ENCODE measurements at regions of chr10 and their contacts with region 1.

Region 1: DNA sequence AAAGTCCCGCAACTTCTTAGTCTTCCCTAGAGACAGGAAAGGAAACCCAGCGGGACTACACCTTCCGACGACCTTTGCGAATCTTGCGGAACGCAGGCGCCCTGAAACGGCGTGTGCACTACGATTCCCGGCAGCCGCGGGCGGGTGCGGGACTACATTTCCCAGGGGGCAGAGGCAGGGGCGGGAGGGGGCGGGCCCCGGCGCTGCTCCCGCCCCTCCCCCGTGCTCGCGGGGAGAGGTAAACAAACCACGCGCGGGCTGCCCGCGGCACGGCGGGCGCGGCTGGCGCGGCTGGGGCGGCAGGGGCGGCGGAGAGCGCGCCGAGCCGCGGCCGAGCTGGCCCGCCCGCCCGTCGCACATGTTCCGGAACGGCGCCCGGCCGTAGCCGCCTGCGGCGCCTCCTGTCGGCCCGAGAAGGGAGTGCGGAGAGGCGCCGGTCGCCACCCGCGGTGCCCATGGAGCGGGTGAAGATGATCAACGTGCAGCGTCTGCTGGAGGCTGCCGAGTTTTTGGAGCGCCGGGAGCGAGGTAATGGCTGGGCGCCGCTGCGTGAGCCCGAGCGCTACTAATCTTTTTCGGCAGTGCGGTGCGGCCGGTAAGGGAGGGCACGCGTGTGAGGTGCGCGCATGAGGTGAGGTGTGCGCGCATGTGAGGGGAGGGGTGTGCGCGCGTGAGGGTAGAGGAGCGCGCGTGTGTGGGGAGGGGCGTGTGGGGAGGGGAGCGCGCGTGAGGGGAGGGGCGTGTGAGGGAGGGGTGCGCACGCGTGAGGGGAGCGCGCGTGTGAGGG is 18.5 kb downstream of the MXI1 start:
- DNase-seq: peak; percentile 79 to 95
- H3K4me3 ChIP-seq: peak overlapping the region; percentile 61 to 86 (median 66)
- H3K27ac ChIP-seq: no peak overlapping the region; the same call in 1 of the 2 replicates
- H3K4me1 ChIP-seq: peaks cover 0 to 13% (median 6%) of the 10 kb centered on the region in 4 experiments; a peak in 6 of 7 replicates
- H3K27me3 ChIP-seq: peaks cover 0 to 2% (median 0%) of the 10 kb centered on the region in 4 experiments; a peak in 1 of 7 replicates
- CTCF ChIP-seq: peak; percentile 67 to 79 (median 70)
- EP300 ChIP-seq: no peak
- POLR2A ChIP-seq: no peak
- RAD21 ChIP-seq: peak; percentile 36 to 56

Region 2: GRCh38 chr10:110168601-110169481 is 57.1 kb before region 1 on chr10:
- CTCF ChIA-PET with region 1: interaction called, 33 read pairs
- POLR2A ChIA-PET with region 1: no interaction called
- DNase-seq: peak; percentile 47 to 51
- H3K4me3 ChIP-seq: no peak overlapping the region
- H3K27ac ChIP-seq: no peak overlapping the region
- H3K4me1 ChIP-seq: peaks cover 0 to 21% (median 8%) of the 10 kb centered on the region in 4 experiments; a peak in 6 of 7 replicates
- H3K27me3 ChIP-seq: peaks cover 69 to 99% (median 94%) of the 10 kb centered on the region in 4 experiments
- CTCF ChIP-seq: no peak
- EP300 ChIP-seq: peak in 1 of 2 experiments; percentile 87; a peak in 1 of 3 replicates
- POLR2A ChIP-seq: no peak
- RAD21 ChIP-seq: no peak

Region 3: DNA sequence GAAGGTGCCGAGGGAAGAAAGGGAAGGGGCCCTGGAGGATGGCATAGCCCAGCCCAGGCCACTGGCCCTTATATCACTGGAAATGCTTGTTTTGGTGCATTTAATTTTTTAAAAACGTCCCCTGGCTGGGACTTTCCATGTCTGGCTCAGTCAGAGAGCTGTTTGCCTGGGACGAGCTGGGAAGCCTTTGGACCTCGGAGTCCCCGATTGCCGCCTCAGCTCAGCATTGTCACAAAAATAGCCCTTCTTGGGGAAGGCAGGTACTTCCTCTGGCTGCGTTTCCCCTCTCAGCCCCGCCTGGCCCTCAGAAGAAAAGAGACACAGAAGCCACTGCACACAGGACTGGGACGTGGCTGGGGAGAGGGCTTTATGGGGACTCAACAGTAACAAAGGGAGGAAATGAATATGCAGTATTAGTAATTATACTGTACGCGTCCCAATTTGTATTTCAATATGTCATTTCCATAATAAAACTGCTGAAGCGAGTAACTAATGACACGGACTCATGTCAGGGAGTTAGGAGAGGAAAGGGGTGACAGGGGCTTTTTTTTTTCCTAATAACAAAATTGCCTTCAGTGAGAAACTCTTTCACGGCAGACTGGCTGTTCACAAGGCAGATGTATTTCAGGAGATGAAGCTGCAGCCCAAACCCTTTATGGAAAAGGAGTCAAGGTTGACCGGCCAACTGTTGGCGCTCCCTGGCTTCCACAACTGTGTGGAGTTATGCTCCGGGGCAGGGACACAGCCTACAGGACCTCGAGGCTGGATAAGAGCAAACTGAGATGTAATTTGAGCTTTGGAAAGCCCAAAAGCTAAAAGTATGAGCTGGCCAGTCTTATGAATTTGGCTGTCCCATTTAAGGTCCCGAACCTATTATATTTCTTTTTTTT is 49.6 kb before region 1 on chr10:
- CTCF ChIA-PET with region 1: interaction called, 18 read pairs
- POLR2A ChIA-PET with region 1: no interaction called
- DNase-seq: no peak
- H3K4me3 ChIP-seq: no peak overlapping the region
- H3K27ac ChIP-seq: no peak overlapping the region
- H3K4me1 ChIP-seq: peaks cover 7 to 17% (median 12%) of the 10 kb centered on the region in 4 experiments
- H3K27me3 ChIP-seq: peaks cover 11 to 58% (median 42%) of the 10 kb centered on the region in 4 experiments
- CTCF ChIP-seq: no peak
- EP300 ChIP-seq: no peak
- POLR2A ChIP-seq: no peak
- RAD21 ChIP-seq: no peak

Region 4: GRCh38 chr10:110192552-110192951 is 33.4 kb before region 1 on chr10:
- CTCF ChIA-PET with region 1: interaction called, 11 read pairs
- POLR2A ChIA-PET with region 1: no interaction called
- DNase-seq: peak in 1 of 2 experiments; percentile 52
- H3K4me3 ChIP-seq: no peak overlapping the region
- H3K27ac ChIP-seq: no peak overlapping the region
- H3K4me1 ChIP-seq: no peaks in the 10 kb centered on the region
- H3K27me3 ChIP-seq: peaks cover 0 to 4% (median 2%) of the 10 kb centered on the region in 4 experiments; a peak in 2 of 7 replicates
- CTCF ChIP-seq: peak; percentile 38 to 75 (median 63)
- EP300 ChIP-seq: no peak
- POLR2A ChIP-seq: no peak
- RAD21 ChIP-seq: peak in 1 of 2 experiments; percentile 45; a peak in 2 of 4 replicates

Region 5: DNA sequence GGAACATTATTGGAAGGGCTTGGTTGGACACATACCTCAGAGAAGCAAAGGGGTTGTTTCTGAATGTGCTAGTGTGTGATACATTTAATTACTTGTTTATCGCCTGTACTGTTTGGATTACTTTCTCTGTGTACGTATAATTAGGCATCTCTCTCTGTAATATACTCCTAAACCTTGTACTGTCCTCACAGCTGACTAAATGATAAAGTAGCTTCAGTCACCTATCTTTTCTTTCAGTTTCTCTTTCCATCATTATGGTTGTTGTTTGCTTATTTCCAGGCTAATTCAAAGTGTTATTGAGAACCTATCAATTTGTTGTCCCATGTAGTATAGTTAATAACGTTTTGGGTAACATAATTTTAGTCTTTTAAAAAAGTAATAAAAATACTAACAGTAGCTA is 15.5 kb after region 1 on chr10:
- CTCF ChIA-PET with region 1: no interaction called
- POLR2A ChIA-PET with region 1: no interaction called
- DNase-seq: no peak
- H3K4me3 ChIP-seq: no peak overlapping the region
- H3K27ac ChIP-seq: no peak overlapping the region
- H3K4me1 ChIP-seq: peaks cover 0 to 5% (median 0%) of the 10 kb centered on the region in 4 experiments; a peak in 2 of 7 replicates
- H3K27me3 ChIP-seq: no peaks in the 10 kb centered on the region
- CTCF ChIP-seq: no peak
- EP300 ChIP-seq: no peak
- POLR2A ChIP-seq: no peak
- RAD21 ChIP-seq: no peak

Region 6: GRCh38 chr10:110279407-110279986 is 53.5 kb after region 1 on chr10:
- CTCF ChIA-PET with region 1: interaction called, 21 read pairs
- POLR2A ChIA-PET with region 1: no interaction called
- DNase-seq: no peak
- H3K4me3 ChIP-seq: no peak overlapping the region
- H3K27ac ChIP-seq: no peak overlapping the region
- H3K4me1 ChIP-seq: no peaks in the 10 kb centered on the region
- H3K27me3 ChIP-seq: no peaks in the 10 kb centered on the region
- CTCF ChIP-seq: peak in 2 of 3 experiments; percentile 70 to 72; a peak in 3 of 4 replicates
- EP300 ChIP-seq: no peak
- POLR2A ChIP-seq: no peak
- RAD21 ChIP-seq: peak; percentile 83 to 86

Region 7: GRCh38 chr10:110354322-110354766 is 128.4 kb after region 1 on chr10:
- CTCF ChIA-PET with region 1: no interaction called
- POLR2A ChIA-PET with region 1: no interaction called
- DNase-seq: peak; percentile 58 to 92
- H3K4me3 ChIP-seq: peak overlapping the region in 1 of 4 experiments; percentile 33; a peak in 1 of 8 replicates
- H3K27ac ChIP-seq: no peak overlapping the region
- H3K4me1 ChIP-seq: peaks cover 5 to 14% (median 10%) of the 10 kb centered on the region in 4 experiments; a peak in 6 of 7 replicates
- H3K27me3 ChIP-seq: no peaks in the 10 kb centered on the region; a peak in 1 of 7 replicates
- CTCF ChIP-seq: peak; percentile 83 to 91 (median 87)
- EP300 ChIP-seq: no peak
- POLR2A ChIP-seq: no peak
- RAD21 ChIP-seq: peak; percentile 78 to 82